ENCODE measurements at regions of chr4 and their contacts with region 1.

Region 1: DNA sequence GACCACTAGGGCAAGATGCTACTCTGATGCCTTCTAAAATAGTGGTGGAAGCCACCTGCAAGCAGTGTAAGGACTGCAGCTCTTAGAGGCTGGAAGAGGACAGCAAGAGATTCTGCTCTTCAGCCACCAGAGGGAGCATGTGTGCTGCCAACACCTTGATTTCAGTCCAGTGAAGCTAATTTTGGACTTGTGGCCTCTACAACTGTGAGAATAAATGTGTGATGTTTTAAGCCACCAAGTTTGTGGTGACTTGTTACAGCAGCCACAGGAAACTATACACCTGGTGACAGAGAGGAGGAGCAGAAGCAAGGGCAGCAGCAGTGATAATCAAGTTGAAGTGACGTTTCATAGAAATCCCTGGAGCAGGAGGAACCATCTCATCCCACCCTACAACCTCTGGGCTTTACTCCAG is 55.9 kb downstream of the FGFBP1 start:
- DNase-seq: peak in 33 of 35 experiments; percentile 2 to 77 (median 27)
- ATAC-seq: peak in 3 of 4 experiments; percentile 48 to 62 (median 57)
- H3K4me3 ChIP-seq: no peak overlapping the region
- H3K4me3 Mint-ChIP-seq: no peak overlapping the region
- H3K27ac ChIP-seq: no peak overlapping the region
- H3K27ac Mint-ChIP-seq: no peak overlapping the region
- H3K4me1 ChIP-seq: no peaks in the 10 kb centered on the region
- H3K4me1 Mint-ChIP-seq: peaks cover 0 to 5% (median 2%) of the 10 kb centered on the region in 3 donors
- H3K27me3 ChIP-seq: peaks cover 0 to 3% of the 10 kb centered on the region in 2 experiments
- H3K27me3 Mint-ChIP-seq: peaks cover 5 to 8% of the 10 kb centered on the region in 2 donors

Region 2: GRCh38 chr4:15956179-15956850 is 73.6 kb after region 1 on chr4:
- CTCF ChIA-PET with region 1: interaction called, 3 to 27 read pairs
- POLR2A ChIA-PET with region 1: interaction called in 1 of 2 experiments, 3 read pairs
- DNase-seq: peak; percentile 47 to 84 (median 73)
- ATAC-seq: peak; percentile 79 to 91 (median 86)
- H3K4me3 ChIP-seq: no peak overlapping the region
- H3K4me3 Mint-ChIP-seq: no peak overlapping the region
- H3K27ac ChIP-seq: no peak overlapping the region
- H3K27ac Mint-ChIP-seq: no peak overlapping the region
- H3K4me1 ChIP-seq: peaks cover 1 to 6% of the 10 kb centered on the region in 2 experiments
- H3K4me1 Mint-ChIP-seq: peaks cover 0 to 8% (median 3%) of the 10 kb centered on the region in 3 donors
- H3K27me3 ChIP-seq: peaks cover 0 to 2% of the 10 kb centered on the region in 2 experiments
- H3K27me3 Mint-ChIP-seq: peaks cover 0 to 4% of the 10 kb centered on the region in 2 donors

Region 3: GRCh38 chr4:16001484-16001858 is 118.8 kb after region 1 on chr4:
- CTCF ChIA-PET with region 1: interaction called, 6 to 26 read pairs
- POLR2A ChIA-PET with region 1: no interaction called
- DNase-seq: peak in 34 of 35 experiments; percentile 1 to 76 (median 26)
- ATAC-seq: peak; percentile 78 to 81 (median 79)
- H3K4me3 ChIP-seq: no peak overlapping the region
- H3K4me3 Mint-ChIP-seq: no peak overlapping the region
- H3K27ac ChIP-seq: no peak overlapping the region
- H3K27ac Mint-ChIP-seq: no peak overlapping the region
- H3K4me1 ChIP-seq: peaks cover 0 to 6% of the 10 kb centered on the region in 2 experiments
- H3K4me1 Mint-ChIP-seq: no peaks in the 10 kb centered on the region
- H3K27me3 ChIP-seq: peaks cover 0 to 14% of the 10 kb centered on the region in 2 experiments
- H3K27me3 Mint-ChIP-seq: peaks cover 4 to 12% of the 10 kb centered on the region in 2 donors

Region 4: GRCh38 chr4:16264798-16265197 is 382.1 kb after region 1 on chr4:
- CTCF ChIA-PET with region 1: interaction called, 5 to 12 read pairs
- POLR2A ChIA-PET with region 1: no interaction called
- DNase-seq: peak in 1 of 35 experiments; percentile 66
- ATAC-seq: peak in 2 of 4 experiments; percentile 50 to 56
- H3K4me3 ChIP-seq: no peak overlapping the region
- H3K4me3 Mint-ChIP-seq: no peak overlapping the region
- H3K27ac ChIP-seq: no peak overlapping the region
- H3K27ac Mint-ChIP-seq: no peak overlapping the region
- H3K4me1 ChIP-seq: peaks cover 0 to 2% of the 10 kb centered on the region in 2 experiments
- H3K4me1 Mint-ChIP-seq: peaks cover 5 to 15% (median 10%) of the 10 kb centered on the region in 3 donors
- H3K27me3 ChIP-seq: no peaks in the 10 kb centered on the region
- H3K27me3 Mint-ChIP-seq: no peaks in the 10 kb centered on the region